ENCODE measurements at regions of chr2 and their contacts with region 1.

Region 1: GRCh38 chr2:215917953-215918620 is 95.3 kb downstream of the MREG start:
- DNase-seq: peak in 3 of 5 donors; percentile 17 to 59 (median 43)
- H3K4me3 ChIP-seq: no peak overlapping the region
- H3K27ac ChIP-seq: no peak overlapping the region
- H3K4me1 ChIP-seq: peaks cover 0 to 8% (median 4%) of the 10 kb centered on the region in 3 donors
- H3K27me3 ChIP-seq: no peaks in the 10 kb centered on the region
- CTCF ChIP-seq: no peak

Region 2: DNA sequence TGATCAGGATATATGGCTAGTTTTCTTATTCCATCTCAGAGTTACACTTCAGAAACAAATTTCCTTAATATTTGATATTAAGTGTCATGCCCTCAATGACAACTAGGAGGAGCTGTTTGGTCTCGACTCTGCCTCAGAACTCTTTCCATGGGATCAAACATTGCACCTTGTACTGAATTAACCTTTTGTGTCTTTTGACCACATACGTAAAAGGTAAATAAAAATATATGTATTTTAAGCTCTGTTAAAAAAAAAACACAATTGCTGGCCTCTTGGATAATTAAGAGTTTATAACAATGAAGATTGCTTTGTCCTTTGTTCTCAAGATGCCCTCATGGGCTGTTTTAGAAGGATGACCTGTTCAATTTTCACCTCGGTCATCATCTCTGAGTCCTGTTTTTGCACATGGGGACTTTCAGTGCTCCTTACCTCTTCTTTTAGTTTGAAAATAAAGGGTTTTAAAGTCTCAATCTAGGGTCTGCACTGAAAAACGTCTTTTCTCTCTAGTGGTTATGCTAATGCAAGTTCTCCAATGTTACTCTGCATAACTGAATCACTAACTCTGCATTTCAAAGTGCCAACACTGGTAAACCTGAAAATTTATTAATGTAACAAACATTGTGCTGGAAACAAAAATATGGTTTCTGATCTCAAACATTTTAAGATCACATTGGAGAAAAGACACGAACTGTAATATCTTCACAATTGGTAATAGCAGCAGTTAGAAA is 463.4 kb before region 1 on chr2:
- intact Hi-C with region 1: loop called (anchors 10 kb)
- DNase-seq: peak in 2 of 5 donors; percentile 35 to 39
- H3K4me3 ChIP-seq: no peak overlapping the region
- H3K27ac ChIP-seq: no peak overlapping the region
- H3K4me1 ChIP-seq: no peaks in the 10 kb centered on the region
- H3K27me3 ChIP-seq: no peaks in the 10 kb centered on the region
- CTCF ChIP-seq: peak; percentile 69

Region 3: GRCh38 chr2:215870986-215871385 is 47.1 kb before region 1 on chr2:
- intact Hi-C with region 1: no loop called
- DNase-seq: no peak
- H3K4me3 ChIP-seq: no peak overlapping the region
- H3K27ac ChIP-seq: no peak overlapping the region
- H3K4me1 ChIP-seq: no peaks in the 10 kb centered on the region
- H3K27me3 ChIP-seq: no peaks in the 10 kb centered on the region
- CTCF ChIP-seq: no peak